WTC11 (cell line): ENCODE measurements at regions of chrX and their contacts with region 1.

Region 1: GRCh38 chrX:49002091-49002935 is at the start of gene GRIPAP1:
- DNase-seq: peak; percentile 68
- ATAC-seq: peak; percentile 73
- H3K4me3 Mint-ChIP-seq: peak within 1 kb of the TSS; percentile 99
- H3K27ac Mint-ChIP-seq: peak within 1 kb of the TSS; percentile 99
- H3K4me1 Mint-ChIP-seq: peaks cover 11% of the 10 kb centered on the region
- H3K27me3 Mint-ChIP-seq: no peaks in the 10 kb centered on the region
- CTCF ChIP-seq: no peak
- total RNA-seq, gene GRIPAP1: 60.0 to 70.7 TPM (median 60.9 TPM) in 3 replicates

Region 2: GRCh38 chrX:48927736-48928382 is 74.5 kb before region 1 on chrX:
- CTCF ChIA-PET with region 1: no interaction called
- POLR2A ChIA-PET with region 1: no interaction called
- DNase-seq: peak; percentile 52
- ATAC-seq: peak; percentile 88
- H3K4me3 Mint-ChIP-seq: peak overlapping the region; percentile 66
- H3K27ac Mint-ChIP-seq: peak overlapping the region; percentile 100
- H3K4me1 Mint-ChIP-seq: peaks cover 43% of the 10 kb centered on the region
- H3K27me3 Mint-ChIP-seq: no peaks in the 10 kb centered on the region
- CTCF ChIP-seq: no peak

Region 3: DNA sequence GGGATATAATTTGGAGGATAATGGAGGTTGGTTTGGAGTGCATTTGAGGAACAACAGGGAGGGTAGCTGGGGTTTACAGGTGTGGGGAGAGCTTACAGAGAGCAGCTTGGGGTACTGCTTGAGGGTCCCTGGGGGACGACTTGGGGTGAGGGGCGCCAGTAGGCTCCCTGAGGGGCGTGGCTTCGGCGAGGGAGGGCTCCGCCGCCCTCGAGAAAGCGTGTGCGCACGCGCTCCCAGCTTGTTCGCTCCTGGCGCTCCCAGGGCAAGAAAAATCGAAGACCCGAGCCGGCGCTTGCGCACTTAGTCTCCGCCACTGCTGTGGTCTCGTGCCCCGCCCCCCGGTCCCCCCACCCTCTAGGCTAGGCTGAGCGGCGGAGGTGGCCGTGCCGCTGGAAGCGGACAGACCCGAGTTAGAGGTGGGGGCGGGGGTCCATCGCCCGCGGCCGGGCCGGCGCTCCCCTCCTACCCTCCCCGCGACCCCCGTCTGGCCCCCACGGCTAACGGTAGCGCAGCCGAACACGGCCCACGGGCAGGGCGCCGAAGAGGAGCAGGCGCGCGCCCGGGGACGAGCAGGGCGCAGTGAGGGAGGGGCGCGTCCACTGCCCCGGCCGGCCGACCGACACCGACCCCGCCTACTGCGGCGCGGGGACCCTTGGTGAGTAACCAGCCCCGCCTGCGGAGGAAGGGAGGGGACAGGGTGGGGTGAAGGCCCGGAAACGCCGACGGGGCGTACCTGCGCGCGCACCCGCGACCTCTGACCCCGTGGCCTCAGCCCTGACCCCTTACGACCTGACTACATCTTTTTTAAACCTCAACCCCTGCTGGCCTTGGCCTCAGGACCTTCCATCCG is 51.1 kb after region 1 on chrX:
- CTCF ChIA-PET with region 1: no interaction called
- POLR2A ChIA-PET with region 1: interaction called, 10 read pairs
- DNase-seq: peak; percentile 78
- ATAC-seq: peak; percentile 82
- H3K4me3 Mint-ChIP-seq: peak overlapping the region; percentile 82
- H3K27ac Mint-ChIP-seq: peak overlapping the region; percentile 64
- H3K4me1 Mint-ChIP-seq: peaks cover 21% of the 10 kb centered on the region
- H3K27me3 Mint-ChIP-seq: no peaks in the 10 kb centered on the region; the same call in 1 of the 2 replicates
- CTCF ChIP-seq: no peak